Common myeloid progenitor, CD34-positive (primary cell): ENCODE measurements at regions of chr9 and their contacts with region 1.

Region 1: DNA sequence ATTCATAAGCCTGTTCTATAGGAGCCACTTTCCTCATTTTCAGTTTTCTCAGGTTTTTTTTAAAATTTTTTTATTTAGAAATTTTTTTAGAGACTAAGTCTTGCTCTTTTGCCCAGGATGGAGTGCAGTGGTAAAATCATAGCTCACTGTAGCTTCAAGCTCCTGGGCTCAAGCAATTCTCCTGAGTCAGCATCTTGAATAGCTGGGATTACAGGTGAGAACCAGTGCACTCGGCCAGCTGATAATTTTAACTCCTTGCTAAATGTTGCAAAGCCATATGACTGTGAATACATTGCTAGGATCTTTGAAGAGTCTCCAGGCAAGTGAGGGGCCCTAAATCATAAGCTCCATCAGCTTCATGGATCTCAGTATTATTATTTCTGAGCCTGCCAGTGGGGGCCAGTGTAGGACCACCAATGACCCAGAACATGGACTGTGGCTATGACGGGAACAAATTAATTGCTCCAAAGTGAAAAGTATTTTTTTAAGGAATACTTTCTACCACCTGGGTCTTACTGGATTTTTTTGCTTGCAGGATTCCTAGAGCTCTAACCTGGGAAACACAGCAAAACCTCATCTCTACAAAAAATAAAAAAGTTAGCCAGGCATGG is 5.7 kb upstream of the GAPVD1 start:
- DNase-seq: peak in 2 of 3 donors; percentile 43 to 53
- H3K4me3 ChIP-seq: no peak overlapping the region
- H3K27ac ChIP-seq: no peak overlapping the region
- H3K4me1 ChIP-seq: peaks cover 14 to 29% (median 19%) of the 10 kb centered on the region in 4 experiments
- H3K27me3 ChIP-seq: no peaks in the 10 kb centered on the region

Region 2: GRCh38 chr9:125066839-125067619 is 188.9 kb before region 1 on chr9:
- CTCF ChIA-PET with region 1: no interaction called
- POLR2A ChIA-PET with region 1: no interaction called
- DNase-seq: no peak
- H3K4me3 ChIP-seq: no peak overlapping the region
- H3K27ac ChIP-seq: no peak overlapping the region
- H3K4me1 ChIP-seq: peaks cover 0 to 3% (median 0%) of the 10 kb centered on the region in 4 experiments
- H3K27me3 ChIP-seq: no peaks in the 10 kb centered on the region

Region 3: GRCh38 chr9:125241000-125241862 is 14.7 kb before region 1 on chr9 and contains the start of gene HSPA5:
- CTCF ChIA-PET with region 1: interaction called, 10 read pairs
- POLR2A ChIA-PET with region 1: interaction called, 34 read pairs
- DNase-seq: peak; percentile 99 to 100 (median 100)
- H3K4me3 ChIP-seq: peak within 1 kb of the TSS; percentile 55 to 100 (median 97)
- H3K27ac ChIP-seq: peak within 1 kb of the TSS; percentile 98 to 99
- H3K4me1 ChIP-seq: peaks cover 9 to 37% (median 25%) of the 10 kb centered on the region in 4 experiments
- H3K27me3 ChIP-seq: no peaks in the 10 kb centered on the region

Region 4: GRCh38 chr9:125361837-125362531 is 106.1 kb after region 1 on chr9:
- CTCF ChIA-PET with region 1: interaction called, 21 read pairs
- POLR2A ChIA-PET with region 1: no interaction called
- DNase-seq: peak; percentile 42 to 76 (median 73)
- H3K4me3 ChIP-seq: no peak overlapping the region
- H3K27ac ChIP-seq: no peak overlapping the region
- H3K4me1 ChIP-seq: no peaks in the 10 kb centered on the region
- H3K27me3 ChIP-seq: no peaks in the 10 kb centered on the region

Region 5: DNA sequence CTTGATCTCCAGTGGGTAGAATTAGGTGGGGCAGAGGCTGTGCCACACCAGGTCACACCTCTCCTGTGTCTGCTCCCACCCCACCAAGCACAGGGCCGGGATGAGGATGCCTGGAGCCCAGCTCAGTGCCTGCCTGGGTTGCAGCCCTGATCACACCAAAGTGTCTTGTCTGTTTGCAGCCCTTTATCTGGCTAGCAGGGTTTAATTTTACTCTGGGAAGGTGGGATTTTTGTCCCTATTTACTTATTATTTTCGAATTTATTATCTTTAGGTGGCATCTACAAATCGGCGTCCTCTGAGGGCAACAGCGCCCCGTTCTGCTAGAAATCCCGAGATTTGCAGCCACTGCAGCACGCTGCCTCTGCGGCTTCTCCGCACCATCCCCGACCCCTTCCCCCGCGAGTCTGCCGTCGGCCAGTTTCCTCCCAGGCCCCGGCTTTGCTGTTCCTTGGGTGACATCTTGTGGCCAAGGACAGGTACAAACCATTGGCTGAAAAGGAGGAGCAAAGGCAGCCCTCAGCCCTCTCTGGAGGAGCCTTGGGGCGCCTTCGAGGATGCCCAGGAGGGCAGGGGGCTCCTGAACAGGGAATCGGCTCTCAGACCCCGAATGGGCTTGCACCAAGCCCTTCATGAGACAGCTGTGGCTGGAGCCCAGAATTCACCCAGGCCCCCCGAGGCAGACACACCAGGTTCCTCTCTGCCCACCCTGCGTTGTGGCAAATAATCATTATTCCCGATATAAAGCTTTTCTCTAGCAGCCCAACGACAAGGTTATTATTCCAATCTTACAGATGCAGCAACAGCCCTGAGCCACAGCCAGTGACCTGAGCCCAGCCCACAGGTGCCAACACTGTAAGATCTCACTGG is 118.8 kb after region 1 on chr9:
- CTCF ChIA-PET with region 1: interaction called, 15 read pairs
- POLR2A ChIA-PET with region 1: no interaction called
- DNase-seq: peak; percentile 73 to 85 (median 84)
- H3K4me3 ChIP-seq: peak overlapping the region in 5 of 7 experiments; percentile 36 to 69 (median 58)
- H3K27ac ChIP-seq: no peak overlapping the region
- H3K4me1 ChIP-seq: peaks cover 0 to 8% (median 6%) of the 10 kb centered on the region in 4 experiments
- H3K27me3 ChIP-seq: peaks cover 0 to 5% (median 0%) of the 10 kb centered on the region in 5 experiments